ENCODE measurements at regions of chr2 and their contacts with region 1.

Region 1: GRCh38 chr2:96856776-96857673 is 791 bp downstream of the ANKRD39 start:
- DNase-seq: peak in 3 of 5 donors; percentile 29 to 40 (median 38)
- H3K4me3 ChIP-seq: peak overlapping the region; percentile 20 to 70
- H3K4me3 Mint-ChIP-seq: peak overlapping the region; percentile 86 to 94 (median 90)
- H3K27ac ChIP-seq: peak overlapping the region; percentile 80
- H3K27ac Mint-ChIP-seq: peak overlapping the region; percentile 69 to 94 (median 86)
- H3K4me1 ChIP-seq: peaks cover 44% of the 10 kb centered on the region
- H3K4me1 Mint-ChIP-seq: peaks cover 22 to 63% (median 36%) of the 10 kb centered on the region in 4 donors
- H3K27me3 ChIP-seq: no peaks in the 10 kb centered on the region
- H3K27me3 Mint-ChIP-seq: no peaks in the 10 kb centered on the region

Region 2: GRCh38 chr2:96565111-96565510 is 291.9 kb before region 1 on chr2:
- CTCF ChIA-PET with region 1: no interaction called
- POLR2A ChIA-PET with region 1: no interaction called
- intact Hi-C with region 1: no loop called
- DNase-seq: no peak
- H3K4me3 ChIP-seq: no peak overlapping the region
- H3K4me3 Mint-ChIP-seq: no peak overlapping the region
- H3K27ac ChIP-seq: no peak overlapping the region
- H3K27ac Mint-ChIP-seq: no peak overlapping the region
- H3K4me1 ChIP-seq: no peaks in the 10 kb centered on the region
- H3K4me1 Mint-ChIP-seq: no peaks in the 10 kb centered on the region
- H3K27me3 ChIP-seq: no peaks in the 10 kb centered on the region
- H3K27me3 Mint-ChIP-seq: peaks cover 0 to 2% of the 10 kb centered on the region in 2 donors

Region 3: GRCh38 chr2:96638144-96639121 is 218.6 kb before region 1 on chr2 and contains the start of gene KANSL3:
- CTCF ChIA-PET with region 1: interaction called, 4 read pairs
- POLR2A ChIA-PET with region 1: interaction called, 14 read pairs
- intact Hi-C with region 1: no loop called
- DNase-seq: peak; percentile 86 to 93 (median 89)
- H3K4me3 ChIP-seq: peak within 1 kb of the TSS; percentile 79 to 92
- H3K4me3 Mint-ChIP-seq: peak within 1 kb of the TSS; percentile 94 to 100 (median 96)
- H3K27ac ChIP-seq: peak within 1 kb of the TSS; percentile 77
- H3K27ac Mint-ChIP-seq: peak within 1 kb of the TSS; percentile 95 to 99 (median 97)
- H3K4me1 ChIP-seq: peaks cover 39% of the 10 kb centered on the region
- H3K4me1 Mint-ChIP-seq: peaks cover 26 to 42% (median 35%) of the 10 kb centered on the region in 4 donors
- H3K27me3 ChIP-seq: no peaks in the 10 kb centered on the region
- H3K27me3 Mint-ChIP-seq: peaks cover 0 to 2% of the 10 kb centered on the region in 2 donors
- total RNA-seq, gene KANSL3: 63.3 to 69.7 TPM

Region 4: DNA sequence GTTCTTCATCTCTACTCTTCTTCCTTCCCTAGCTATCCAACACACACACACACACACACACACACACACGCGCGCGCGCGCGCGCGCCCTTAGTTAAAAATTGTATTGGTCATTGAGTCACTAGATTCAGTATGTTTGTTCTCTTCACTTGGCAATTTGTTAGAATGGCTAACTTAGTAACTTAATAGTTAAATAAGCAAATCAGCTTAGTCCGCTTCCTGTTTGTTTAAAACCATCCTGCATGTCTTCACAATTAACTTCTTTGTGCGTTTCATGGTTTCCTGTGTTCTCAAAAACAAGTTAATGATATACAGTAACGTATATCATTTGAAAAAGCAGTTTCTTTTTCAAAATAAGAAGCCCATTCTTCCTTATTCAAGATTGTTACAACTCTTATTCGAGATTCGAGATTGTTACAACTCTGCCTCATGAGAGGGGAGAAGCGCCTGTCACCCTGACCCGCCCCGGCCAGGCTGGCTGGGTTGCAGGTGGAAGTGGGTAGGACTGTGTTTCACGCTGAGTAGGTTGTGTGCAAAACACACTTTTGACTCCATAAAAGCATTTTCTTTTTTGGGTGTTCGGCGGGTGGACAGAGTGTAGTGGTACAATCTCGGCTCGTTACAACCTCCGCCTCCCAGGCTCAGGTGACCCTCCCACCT is 50.4 kb before region 1 on chr2:
- CTCF ChIA-PET with region 1: interaction called, 10 read pairs
- POLR2A ChIA-PET with region 1: interaction called, 16 read pairs
- intact Hi-C with region 1: no loop called
- DNase-seq: peak; percentile 68 to 82 (median 78)
- H3K4me3 ChIP-seq: peak overlapping the region in 1 of 2 donors; percentile 38
- H3K4me3 Mint-ChIP-seq: peak overlapping the region; percentile 79 to 92 (median 86)
- H3K27ac ChIP-seq: peak overlapping the region; percentile 22
- H3K27ac Mint-ChIP-seq: peak overlapping the region; percentile 91 to 100 (median 98)
- H3K4me1 ChIP-seq: peaks cover 39% of the 10 kb centered on the region
- H3K4me1 Mint-ChIP-seq: peaks cover 16 to 47% (median 27%) of the 10 kb centered on the region in 4 donors
- H3K27me3 ChIP-seq: no peaks in the 10 kb centered on the region
- H3K27me3 Mint-ChIP-seq: no peaks in the 10 kb centered on the region

Region 5: DNA sequence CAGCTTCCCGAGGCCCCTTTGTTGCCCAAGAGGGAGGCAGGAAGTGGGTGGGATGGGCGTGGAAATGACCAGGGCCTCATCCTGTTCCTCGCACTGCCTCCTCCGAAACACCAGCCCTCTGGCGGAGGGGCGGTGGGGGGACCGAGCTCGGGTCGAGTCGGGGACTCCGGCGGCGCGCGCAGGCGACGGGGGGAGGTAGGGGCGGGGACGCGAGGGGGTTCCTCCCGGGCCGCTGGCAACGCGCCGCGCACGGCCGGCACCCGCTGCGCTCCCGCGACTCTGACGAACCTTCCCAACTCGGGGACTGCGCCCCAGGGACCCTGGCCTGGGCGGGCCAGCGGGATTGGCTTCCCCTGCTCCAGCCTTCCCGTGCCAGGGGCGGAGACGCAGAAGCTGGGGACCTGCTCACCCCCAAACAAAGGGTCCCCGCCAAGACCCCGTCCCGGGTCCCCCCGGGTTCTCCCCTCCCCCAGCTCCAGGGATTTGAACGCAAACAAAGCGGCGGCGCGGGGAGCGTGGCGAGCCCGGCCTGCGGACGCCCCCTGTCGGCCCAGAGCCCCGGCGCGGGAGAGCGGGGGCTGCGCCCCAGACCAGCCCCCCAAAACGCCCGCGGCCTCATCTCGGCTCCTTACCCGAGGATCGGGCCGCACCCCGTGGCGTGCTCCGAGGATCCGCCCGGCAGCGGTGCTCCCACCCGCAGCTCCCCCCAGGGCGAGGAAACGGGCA is 11.7 kb after region 1 on chr2:
- CTCF ChIA-PET with region 1: interaction called, 71 read pairs
- POLR2A ChIA-PET with region 1: interaction called, 161 read pairs
- intact Hi-C with region 1: loop called (anchors 1 kb)
- DNase-seq: peak; percentile 50 to 72 (median 52)
- H3K4me3 ChIP-seq: peak overlapping the region; percentile 47 to 72
- H3K4me3 Mint-ChIP-seq: peak overlapping the region; percentile 69 to 91 (median 88)
- H3K27ac ChIP-seq: peak overlapping the region; percentile 68
- H3K27ac Mint-ChIP-seq: peak overlapping the region in 6 of 7 donors; percentile 79 to 94 (median 92)
- H3K4me1 ChIP-seq: peaks cover 39% of the 10 kb centered on the region
- H3K4me1 Mint-ChIP-seq: peaks cover 27 to 58% (median 42%) of the 10 kb centered on the region in 4 donors
- H3K27me3 ChIP-seq: no peaks in the 10 kb centered on the region
- H3K27me3 Mint-ChIP-seq: no peaks in the 10 kb centered on the region

Region 6: GRCh38 chr2:96913398-96914202 is 56.6 kb after region 1 on chr2:
- CTCF ChIA-PET with region 1: interaction called, 8 read pairs
- POLR2A ChIA-PET with region 1: interaction called, 26 read pairs
- intact Hi-C with region 1: loop called (anchors 1 kb)
- DNase-seq: peak; percentile 62 to 76 (median 67)
- H3K4me3 ChIP-seq: peak overlapping the region; percentile 57 to 76
- H3K4me3 Mint-ChIP-seq: peak overlapping the region; percentile 83 to 93 (median 88)
- H3K27ac ChIP-seq: peak overlapping the region; percentile 54
- H3K27ac Mint-ChIP-seq: peak overlapping the region; percentile 81 to 98 (median 97)
- H3K4me1 ChIP-seq: peaks cover 64% of the 10 kb centered on the region
- H3K4me1 Mint-ChIP-seq: peaks cover 45 to 85% (median 70%) of the 10 kb centered on the region in 4 donors
- H3K27me3 ChIP-seq: no peaks in the 10 kb centered on the region
- H3K27me3 Mint-ChIP-seq: no peaks in the 10 kb centered on the region

Region 7: GRCh38 chr2:96945012-96945804 is 88.2 kb after region 1 on chr2:
- CTCF ChIA-PET with region 1: interaction called, 624 read pairs
- POLR2A ChIA-PET with region 1: interaction called, 194 read pairs
- intact Hi-C with region 1: no loop called
- DNase-seq: no peak
- H3K4me3 ChIP-seq: no peak overlapping the region
- H3K4me3 Mint-ChIP-seq: peak overlapping the region in 2 of 8 donors; percentile 9 to 59
- H3K27ac ChIP-seq: no peak overlapping the region
- H3K27ac Mint-ChIP-seq: no peak overlapping the region
- H3K4me1 ChIP-seq: peaks cover 22% of the 10 kb centered on the region
- H3K4me1 Mint-ChIP-seq: peaks cover 24 to 34% (median 27%) of the 10 kb centered on the region in 4 donors
- H3K27me3 ChIP-seq: no peaks in the 10 kb centered on the region
- H3K27me3 Mint-ChIP-seq: peaks cover 0 to 1% of the 10 kb centered on the region in 2 donors